ENCODE measurements at regions of chr22 and their contacts with region 1.

Region 1: GRCh38 chr22:24247011-24247507 is 2.2 kb upstream of the GGT5 start:
- DNase-seq: peak in 1 of 10 donors; percentile 67

Region 2: GRCh38 chr22:24156913-24157821 is 89.9 kb before region 1 on chr22:
- intact Hi-C with region 1: no loop called
- DNase-seq: peak; percentile 33 to 93 (median 62)

Region 3: DNA sequence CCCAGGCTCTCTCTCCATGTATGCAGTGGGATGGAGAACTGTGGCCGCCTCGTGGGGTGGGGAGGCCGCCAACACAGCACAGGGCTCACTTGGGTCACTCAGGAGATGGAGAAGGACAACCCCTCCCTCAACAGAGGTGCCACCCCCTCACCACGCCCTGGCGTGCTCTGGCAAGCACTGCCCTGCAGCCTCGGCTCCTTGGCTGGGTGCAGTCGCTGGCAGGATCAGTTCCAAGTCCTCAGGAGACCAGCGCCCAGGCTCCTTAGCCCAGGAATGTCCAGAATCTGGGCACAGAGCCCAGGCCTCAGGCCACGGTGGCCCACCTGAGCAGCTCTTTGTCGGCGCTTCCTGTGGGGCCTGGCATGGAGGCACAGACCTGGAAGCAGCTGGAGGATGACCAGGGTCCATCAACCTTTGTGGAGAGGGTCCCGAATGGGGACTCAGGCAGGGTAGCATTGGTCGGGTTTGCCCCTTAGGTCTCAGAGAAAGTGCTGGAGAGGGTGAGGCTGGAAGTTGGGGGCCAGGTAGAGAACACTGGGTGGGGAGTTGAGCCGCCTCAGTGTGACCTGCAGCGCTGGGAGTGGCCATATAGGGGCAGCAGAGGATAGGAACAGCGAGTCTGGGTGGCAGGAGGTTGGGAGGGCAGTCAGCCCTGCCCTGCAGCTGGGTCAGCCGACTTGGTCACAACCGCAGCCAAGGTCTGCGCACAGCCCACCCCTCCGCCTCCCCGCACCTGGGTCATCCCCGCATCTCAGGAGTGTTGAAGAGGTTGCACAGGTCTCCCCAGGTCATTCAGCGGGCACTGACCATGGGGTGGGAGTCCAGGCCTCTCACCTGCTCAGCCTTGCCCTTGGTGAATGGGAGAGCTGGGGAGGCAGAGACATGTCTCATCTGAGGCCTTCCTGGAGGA is 57.6 kb before region 1 on chr22:
- intact Hi-C with region 1: loop called (anchors 5 kb)
- DNase-seq: peak in 8 of 10 donors; percentile 39 to 92 (median 54)

Measured in posterior cingulate gyrus (tissue), 11 donors.